ENCODE measurements at regions of chr6 and their contacts with region 1.

Region 1: DNA sequence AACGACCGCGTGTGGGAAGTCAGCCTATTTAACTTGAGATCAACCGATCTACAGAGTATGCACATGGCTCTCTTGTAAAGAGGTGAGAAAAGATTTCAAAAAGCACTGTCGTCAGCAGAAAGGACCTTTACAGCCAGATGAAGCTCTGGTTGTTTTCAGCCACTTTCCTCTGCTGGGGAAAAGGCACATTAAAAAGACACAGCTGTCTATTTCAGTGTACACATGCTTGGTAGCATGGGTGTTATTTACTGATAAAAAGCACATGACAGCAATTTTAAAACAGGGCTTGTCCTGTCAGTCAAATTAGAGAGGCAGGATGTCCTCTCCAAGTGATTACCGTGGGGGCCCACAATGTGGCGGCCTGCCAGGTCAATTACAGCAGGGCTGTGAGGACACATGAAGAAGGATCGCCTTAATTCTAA is 188.9 kb downstream of the PRKN start:
- DNase-seq: peak; percentile 82

Region 2: DNA sequence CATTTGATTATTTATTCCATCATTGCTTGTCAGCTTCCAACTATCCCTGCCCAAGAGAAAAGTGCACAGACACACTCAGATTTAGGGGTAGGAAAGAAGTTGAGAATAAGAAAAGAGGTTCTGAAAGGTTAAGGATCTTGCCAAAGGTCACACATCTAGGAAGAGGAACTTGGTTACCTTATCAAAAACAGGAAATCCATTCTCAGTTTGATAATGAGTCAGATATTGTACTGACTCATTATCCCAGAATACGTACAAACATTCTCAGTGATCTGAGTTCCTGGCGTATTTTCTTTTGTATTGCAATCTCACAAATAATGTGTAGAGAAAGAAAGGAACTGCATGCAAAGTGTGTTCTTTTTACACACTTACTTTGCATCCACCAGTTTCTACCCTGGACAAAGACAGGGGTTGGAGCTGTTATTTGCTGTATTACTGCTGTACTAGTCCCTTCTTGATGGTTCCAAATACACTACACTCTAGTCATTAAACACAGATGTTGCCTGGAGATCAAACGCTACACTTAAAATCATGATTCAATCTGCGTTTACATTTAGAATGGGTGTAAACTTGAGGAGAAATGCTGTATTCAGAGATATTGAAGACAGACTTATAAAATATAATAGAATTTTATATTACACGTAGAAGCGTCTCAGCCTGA is 356.8 kb before region 1 on chr6:
- intact Hi-C with region 1: loop called (anchors 10 kb)
- DNase-seq: no peak

Region 3: GRCh38 chr6:162468326-162468725 is 70.3 kb before region 1 on chr6:
- intact Hi-C with region 1: loop called (anchors 5 kb)
- DNase-seq: no peak

Region 4: DNA sequence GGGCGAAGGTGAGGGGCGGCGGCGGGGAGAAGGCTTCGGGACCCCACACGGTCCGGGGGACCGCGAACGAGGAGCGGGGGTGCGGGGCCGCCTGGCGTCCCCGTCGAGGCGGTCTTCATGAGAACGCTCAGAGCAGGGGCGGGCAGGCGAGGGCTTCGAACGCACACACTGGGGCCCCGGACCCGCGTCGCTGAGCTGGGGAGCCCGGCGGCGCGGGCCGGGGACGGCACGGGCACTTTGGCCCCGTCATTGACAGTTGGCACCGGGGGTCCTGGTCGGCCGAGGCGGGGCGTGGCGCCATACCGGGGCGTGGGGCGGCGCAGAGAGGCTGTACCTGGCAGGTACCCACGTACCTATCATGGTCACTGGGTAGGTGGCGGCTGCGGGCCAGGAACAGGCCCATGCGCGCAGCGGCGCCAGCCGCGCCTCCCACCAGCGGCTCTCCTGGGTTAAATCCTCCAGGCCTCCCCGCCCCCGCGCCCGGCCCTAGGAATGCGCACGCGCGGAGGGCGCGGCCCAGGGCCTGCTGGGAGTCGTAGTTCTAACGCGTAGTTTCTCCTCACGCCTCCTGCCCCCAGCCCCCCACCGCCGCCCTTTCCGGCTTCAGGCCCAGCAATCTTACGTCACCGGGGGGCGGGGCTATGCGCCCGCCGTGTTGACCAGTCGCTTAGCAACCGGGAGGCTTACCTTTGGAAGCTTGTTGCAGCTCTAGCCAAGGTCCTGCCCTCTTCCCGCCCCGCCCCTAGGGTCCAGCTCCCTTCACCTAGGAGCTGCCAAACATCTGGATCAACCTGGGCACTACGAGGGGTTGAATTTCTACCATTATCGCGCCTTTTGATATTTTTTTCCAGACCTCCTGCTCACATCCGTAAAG is 188.9 kb after region 1 on chr6 and contains the starts of genes PACRG and PRKN:
- intact Hi-C with region 1: loop called (anchors 5 kb)
- DNase-seq: peak; percentile 98
- total RNA-seq, gene PACRG: 14.1 TPM
- total RNA-seq, gene PRKN: 23.2 TPM

Region 5: GRCh38 chr6:162753775-162754174 is 215.1 kb after region 1 on chr6:
- intact Hi-C with region 1: no loop called
- DNase-seq: no peak